G401 (cell line): ENCODE measurements at regions of chr19 and their contacts with region 1.

Region 1: GRCh38 chr19:12187625-12188024 is 24.7 kb downstream of the ZNF136 start:
- DNase-seq: no peak

Region 2: GRCh38 chr19:12112701-12113100 is 74.9 kb before region 1 on chr19:
- in situ Hi-C with region 1: loop called (anchors 10 kb)
- DNase-seq: no peak

Region 3: GRCh38 chr19:12365236-12366162 is 177.9 kb after region 1 on chr19 and contains the start of gene ZNF442:
- in situ Hi-C with region 1: no loop called
- DNase-seq: peak; percentile 100
- total RNA-seq, gene ZNF442: 2.5 and 7.7 TPM in 2 replicates